Endothelial cell of umbilical vein (primary cell): ENCODE measurements at regions of chr12 and their contacts with region 1.

Region 1: DNA sequence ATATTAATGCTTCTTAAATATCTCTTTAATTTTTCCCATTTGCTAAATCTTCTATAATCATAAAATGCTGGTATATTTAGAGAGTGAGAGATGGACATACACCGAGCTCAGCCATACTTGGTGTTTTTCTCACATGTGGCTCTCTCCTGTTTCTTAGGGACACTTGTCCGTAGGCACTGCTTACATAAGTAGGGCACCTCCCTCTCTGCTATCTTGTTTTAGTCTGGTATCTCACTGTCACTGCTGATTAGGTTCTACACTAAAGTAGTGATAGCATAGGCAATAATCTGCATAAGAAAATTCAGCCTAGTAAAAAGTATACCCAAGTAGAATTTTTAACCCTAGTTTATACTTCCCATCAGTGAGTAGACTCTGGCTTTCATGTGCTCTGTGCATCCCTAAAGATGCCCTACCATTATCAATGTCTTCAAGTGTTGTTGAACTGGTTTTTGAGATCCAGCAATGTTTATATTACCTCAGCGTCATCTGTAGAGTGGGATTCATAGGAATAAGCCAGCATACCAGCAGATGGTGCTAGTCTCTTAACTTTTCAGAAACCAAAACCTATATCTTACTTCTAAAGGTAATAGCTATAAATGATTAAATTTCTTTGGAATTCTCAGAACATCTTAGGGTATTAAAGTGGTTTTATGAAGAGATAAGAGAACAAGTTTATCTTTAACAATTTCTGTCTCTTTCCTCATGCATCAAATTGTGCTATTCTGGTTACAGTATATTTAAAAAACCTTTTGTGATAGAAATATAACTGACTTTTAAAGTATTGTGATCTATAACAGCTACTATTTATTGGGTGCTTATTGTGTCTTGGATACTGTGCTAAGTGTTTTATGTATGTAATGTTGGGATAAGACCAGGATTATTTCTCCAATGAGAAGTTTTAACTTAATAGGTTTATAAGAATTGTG is 32.9 kb downstream of the ARID2 start:
- DNase-seq: peak; percentile 70
- H3K4me3 ChIP-seq: no peak overlapping the region
- H3K27ac ChIP-seq: no peak overlapping the region
- H3K4me1 ChIP-seq: no peaks in the 10 kb centered on the region
- H3K27me3 ChIP-seq: no peaks in the 10 kb centered on the region
- CTCF ChIP-seq: peak; percentile 47 to 56
- POLR2A ChIP-seq: no peak

Region 2: DNA sequence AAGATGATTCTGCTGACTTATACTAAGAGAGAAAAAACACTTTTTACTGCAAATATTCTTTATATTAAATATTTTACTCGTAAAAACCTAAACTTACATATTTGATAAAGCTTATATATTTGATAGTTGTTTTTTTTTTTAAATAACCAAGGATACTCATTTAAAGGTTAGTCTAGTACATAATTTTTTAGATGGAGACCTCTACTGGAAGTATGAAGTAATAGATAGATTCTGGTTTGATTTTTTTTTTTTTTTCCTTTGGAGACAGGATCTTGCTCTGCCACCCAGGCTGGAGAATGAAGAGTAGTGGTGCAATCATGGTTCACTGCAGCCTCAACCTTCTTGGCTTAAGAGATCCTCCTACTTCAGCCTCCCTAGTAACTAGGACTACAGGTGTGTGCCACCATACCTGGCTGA is 16.6 kb before region 1 on chr12:
- CTCF ChIA-PET with region 1: interaction called, 12 read pairs
- POLR2A ChIA-PET with region 1: no interaction called
- dilution Hi-C with region 1: no loop called
- intact Hi-C with region 1: no loop called
- DNase-seq: peak; percentile 22
- H3K4me3 ChIP-seq: no peak overlapping the region
- H3K27ac ChIP-seq: no peak overlapping the region
- H3K4me1 ChIP-seq: no peaks in the 10 kb centered on the region
- H3K27me3 ChIP-seq: no peaks in the 10 kb centered on the region
- CTCF ChIP-seq: peak; percentile 5 to 16
- POLR2A ChIP-seq: no peak

Region 3: DNA sequence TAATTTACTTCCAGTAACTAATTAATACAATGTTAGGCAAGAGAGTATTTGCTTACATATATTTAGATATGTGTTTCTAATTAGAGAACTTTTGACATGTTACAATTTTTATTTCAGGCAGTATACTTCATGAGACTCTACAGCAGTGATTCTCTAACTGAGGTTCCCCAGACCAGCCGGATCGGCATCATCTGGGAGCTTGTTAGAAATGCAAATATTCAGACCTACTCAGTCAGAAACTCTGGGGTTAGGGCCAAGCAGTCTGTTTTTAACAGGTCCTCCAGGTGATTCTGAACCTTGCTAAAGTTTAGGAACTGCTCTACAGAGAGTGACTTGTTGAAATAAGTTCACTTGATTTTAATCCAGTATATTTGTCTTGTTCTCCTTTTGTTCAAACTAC is 13.5 kb after region 1 on chr12:
- CTCF ChIA-PET with region 1: interaction called, 18 read pairs
- POLR2A ChIA-PET with region 1: no interaction called
- dilution Hi-C with region 1: no loop called
- intact Hi-C with region 1: no loop called
- DNase-seq: no peak
- H3K4me3 ChIP-seq: no peak overlapping the region
- H3K27ac ChIP-seq: no peak overlapping the region
- H3K4me1 ChIP-seq: peaks cover 13% of the 10 kb centered on the region
- H3K27me3 ChIP-seq: no peaks in the 10 kb centered on the region
- CTCF ChIP-seq: no peak
- POLR2A ChIP-seq: no peak

Region 4: GRCh38 chr12:45893240-45893639 is 130.8 kb after region 1 on chr12:
- CTCF ChIA-PET with region 1: interaction called, 8 read pairs
- POLR2A ChIA-PET with region 1: no interaction called
- dilution Hi-C with region 1: no loop called
- intact Hi-C with region 1: loop called (anchors 5 kb)
- DNase-seq: no peak
- H3K4me3 ChIP-seq: no peak overlapping the region
- H3K27ac ChIP-seq: no peak overlapping the region
- H3K4me1 ChIP-seq: no peaks in the 10 kb centered on the region
- H3K27me3 ChIP-seq: no peaks in the 10 kb centered on the region
- CTCF ChIP-seq: peak; percentile 7 to 10
- POLR2A ChIP-seq: no peak

Region 5: DNA sequence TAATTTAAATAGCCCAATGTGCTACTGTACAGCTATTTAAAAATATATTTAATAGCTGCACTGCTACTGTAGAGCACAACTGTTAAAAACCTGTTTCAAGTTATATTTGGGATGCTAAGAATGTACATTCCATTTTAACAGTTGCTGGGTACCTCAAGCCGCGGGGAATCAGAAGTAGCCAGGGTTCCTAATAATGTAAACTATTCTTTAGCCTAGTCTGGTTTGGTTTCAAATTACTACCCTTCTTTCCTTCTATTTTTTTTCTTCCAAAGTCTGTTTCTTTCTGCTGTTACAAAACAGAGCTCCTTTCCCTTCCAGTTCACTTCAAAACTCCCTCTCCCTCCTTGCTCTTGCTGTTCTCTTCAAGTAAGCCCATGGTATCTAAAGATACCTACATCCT is 206.6 kb after region 1 on chr12:
- CTCF ChIA-PET with region 1: no interaction called
- POLR2A ChIA-PET with region 1: no interaction called
- dilution Hi-C with region 1: no loop called
- intact Hi-C with region 1: no loop called
- DNase-seq: no peak
- H3K4me3 ChIP-seq: no peak overlapping the region
- H3K27ac ChIP-seq: no peak overlapping the region
- H3K4me1 ChIP-seq: peaks cover 11% of the 10 kb centered on the region
- H3K27me3 ChIP-seq: no peaks in the 10 kb centered on the region
- CTCF ChIP-seq: no peak
- POLR2A ChIP-seq: no peak

Region 6: GRCh38 chr12:46005151-46005797 is 242.8 kb after region 1 on chr12:
- CTCF ChIA-PET with region 1: interaction called, 23 read pairs
- POLR2A ChIA-PET with region 1: no interaction called
- dilution Hi-C with region 1: no loop called
- intact Hi-C with region 1: loop called (anchors 5 kb)
- DNase-seq: peak; percentile 34
- H3K4me3 ChIP-seq: no peak overlapping the region
- H3K27ac ChIP-seq: no peak overlapping the region
- H3K4me1 ChIP-seq: no peaks in the 10 kb centered on the region
- H3K27me3 ChIP-seq: peaks cover 5 to 13% of the 10 kb centered on the region in 2 experiments
- CTCF ChIP-seq: no peak
- POLR2A ChIP-seq: no peak

Region 7: DNA sequence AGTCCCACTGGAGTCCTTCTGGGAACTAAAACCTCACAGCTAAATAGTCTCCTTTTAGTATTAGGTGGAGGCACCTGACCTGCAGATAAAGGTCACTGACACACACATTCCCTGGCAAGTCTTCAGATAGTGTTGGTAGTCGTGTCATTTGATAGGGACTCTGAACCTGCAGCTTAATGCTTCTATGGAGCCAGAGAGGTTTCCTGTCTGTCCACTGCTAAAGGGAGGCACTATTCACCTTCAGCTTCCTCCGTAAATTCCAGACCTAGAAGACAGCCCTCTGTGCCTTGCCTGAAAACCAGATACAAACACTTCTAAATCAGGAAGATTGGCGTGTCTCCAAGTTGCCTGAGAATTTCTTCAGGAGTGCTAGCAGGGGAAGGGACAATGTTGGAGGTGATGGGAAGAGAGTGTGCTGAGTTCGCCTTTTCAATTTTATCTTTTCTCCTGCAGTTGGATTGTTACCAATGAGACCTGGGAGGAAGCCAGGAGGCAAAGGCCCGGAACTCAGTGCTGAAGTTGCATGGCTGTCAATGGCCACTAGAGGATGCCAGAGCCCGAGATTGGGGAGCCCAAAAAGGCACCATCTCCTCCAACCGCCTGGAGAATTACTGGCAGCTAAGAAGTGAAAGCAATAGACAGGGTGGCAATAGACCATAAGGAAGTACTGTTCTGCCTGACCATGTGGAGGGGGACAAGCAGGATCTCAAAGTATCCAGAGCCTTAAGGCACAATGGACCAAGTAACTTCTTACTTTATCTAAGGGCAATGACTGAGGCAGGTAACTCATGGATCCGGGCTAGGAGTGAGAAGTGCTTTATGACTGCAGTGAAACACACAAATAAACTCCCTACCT is 309.5 kb after region 1 on chr12:
- CTCF ChIA-PET with region 1: interaction called, 5 read pairs
- POLR2A ChIA-PET with region 1: no interaction called
- dilution Hi-C with region 1: no loop called
- intact Hi-C with region 1: loop called (anchors 5 kb)
- DNase-seq: peak; percentile 67
- H3K4me3 ChIP-seq: no peak overlapping the region
- H3K27ac ChIP-seq: no peak overlapping the region
- H3K4me1 ChIP-seq: no peaks in the 10 kb centered on the region
- H3K27me3 ChIP-seq: peaks cover 10 to 14% of the 10 kb centered on the region in 2 experiments
- CTCF ChIP-seq: peak; percentile 88 to 94
- POLR2A ChIP-seq: no peak